H1 (cell line): ENCODE measurements at regions of chr16 and their contacts with region 1.

Region 1: DNA sequence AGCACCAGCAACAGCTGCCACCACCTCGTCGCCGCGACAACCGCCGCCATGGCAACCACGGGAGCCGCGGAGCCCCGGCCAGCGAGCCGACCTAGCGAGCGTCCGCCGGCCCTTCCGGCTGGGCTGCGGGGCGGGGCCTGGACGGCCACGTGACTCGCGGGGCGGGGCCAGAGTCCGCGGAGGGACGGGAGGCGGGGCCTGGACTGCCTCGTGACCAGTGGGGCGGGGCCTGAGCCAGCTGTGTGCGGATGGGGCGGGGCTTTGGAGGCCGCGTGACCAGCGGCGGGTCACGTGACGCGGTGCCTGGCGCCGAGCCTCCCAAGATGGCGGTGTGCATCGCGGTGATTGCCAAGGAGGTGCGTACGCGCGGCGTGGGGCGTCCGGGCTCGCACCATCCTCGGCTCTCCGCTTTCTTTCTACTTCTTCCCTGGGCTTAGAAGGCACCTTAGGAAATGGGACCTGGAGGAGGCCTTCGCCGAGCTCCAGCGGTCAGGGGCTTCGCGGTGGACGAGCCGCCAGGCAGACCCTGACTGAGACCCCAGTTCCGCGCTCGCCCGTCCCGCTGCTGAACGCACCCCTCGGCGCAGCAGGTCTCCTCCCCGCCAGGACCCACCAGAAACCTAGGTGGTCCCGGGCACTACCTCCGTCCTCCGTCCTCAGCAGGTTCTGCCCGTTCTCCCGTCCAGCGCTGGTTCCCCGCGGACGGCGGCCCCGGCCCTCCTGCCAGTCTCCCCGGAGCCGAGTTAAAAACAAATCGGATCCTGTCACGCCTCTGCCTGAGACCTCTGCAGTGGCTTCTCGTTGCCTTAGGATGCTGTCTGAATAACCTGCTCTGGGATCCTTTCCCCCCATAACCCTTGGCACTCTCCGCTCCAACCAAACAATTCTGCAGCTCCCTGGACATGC is at the starts of genes GALNS and TRAPPC2L:
- DNase-seq: peak; percentile 82 to 100
- H3K4me3 ChIP-seq: peak within 1 kb of the TSS; percentile 60 to 96 (median 92)
- H3K27ac ChIP-seq: peak within 1 kb of the TSS; percentile 13; the same call in 1 of the 2 replicates
- H3K4me1 ChIP-seq: peaks cover 0 to 5% (median 3%) of the 10 kb centered on the region in 4 experiments; a peak in 5 of 7 replicates
- H3K27me3 ChIP-seq: no peaks in the 10 kb centered on the region
- CTCF ChIP-seq: no peak
- EP300 ChIP-seq: no peak
- POLR2A ChIP-seq: peak in 1 of 2 experiments; percentile 89; a peak in 2 of 3 replicates
- RAD21 ChIP-seq: no peak
- total RNA-seq, gene GALNS: 17.8 and 22.4 TPM in 2 replicates
- total RNA-seq, gene TRAPPC2L: 94.0 and 98.7 TPM in 2 replicates

Region 2: DNA sequence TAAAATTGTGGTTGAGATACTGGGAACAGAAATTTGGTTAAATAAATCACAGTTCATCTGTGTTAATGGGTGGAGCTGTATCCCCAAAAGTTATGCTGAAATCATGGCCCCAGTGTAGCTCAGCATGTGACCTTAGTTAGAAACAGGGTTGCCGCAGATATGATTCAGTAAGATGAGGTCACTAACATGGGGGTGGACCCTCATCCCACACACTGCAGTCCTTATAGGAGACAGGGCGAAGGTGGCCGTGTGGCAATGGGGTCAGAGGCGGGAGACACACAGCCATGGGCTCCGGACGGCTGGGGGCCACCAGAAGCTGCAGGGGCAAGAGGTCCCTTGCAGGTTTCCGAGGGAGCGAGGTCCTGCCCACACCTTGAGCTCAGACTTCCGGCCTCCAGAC is 11.0 kb before region 1 on chr16:
- CTCF ChIA-PET with region 1: interaction called, 11 read pairs
- POLR2A ChIA-PET with region 1: interaction called, 4 read pairs
- DNase-seq: no peak
- H3K4me3 ChIP-seq: no peak overlapping the region
- H3K27ac ChIP-seq: no peak overlapping the region
- H3K4me1 ChIP-seq: no peaks in the 10 kb centered on the region
- H3K27me3 ChIP-seq: no peaks in the 10 kb centered on the region
- CTCF ChIP-seq: no peak
- EP300 ChIP-seq: no peak
- POLR2A ChIP-seq: no peak
- RAD21 ChIP-seq: no peak

Region 3: GRCh38 chr16:88881007-88881615 is 24.0 kb after region 1 on chr16:
- CTCF ChIA-PET with region 1: interaction called, 11 read pairs
- POLR2A ChIA-PET with region 1: interaction called, 5 read pairs
- DNase-seq: no peak
- H3K4me3 ChIP-seq: 0 out of 8 replicates have a peak overlapping the region, but pooled peaks of 1 of the 4 experiments have one; percentile 24
- H3K27ac ChIP-seq: no peak overlapping the region
- H3K4me1 ChIP-seq: peaks cover 0 to 9% (median 4%) of the 10 kb centered on the region in 4 experiments; a peak in 4 of 7 replicates
- H3K27me3 ChIP-seq: peaks cover 0 to 7% (median 1%) of the 10 kb centered on the region in 4 experiments; a peak in 2 of 7 replicates
- CTCF ChIP-seq: no peak
- EP300 ChIP-seq: no peak
- POLR2A ChIP-seq: no peak
- RAD21 ChIP-seq: no peak

Region 4: GRCh38 chr16:88896238-88897070 is 39.4 kb after region 1 on chr16:
- CTCF ChIA-PET with region 1: interaction called, 10 read pairs
- POLR2A ChIA-PET with region 1: no interaction called
- DNase-seq: no peak
- H3K4me3 ChIP-seq: no peak overlapping the region
- H3K27ac ChIP-seq: no peak overlapping the region
- H3K4me1 ChIP-seq: no peaks in the 10 kb centered on the region
- H3K27me3 ChIP-seq: no peaks in the 10 kb centered on the region
- CTCF ChIP-seq: no peak
- EP300 ChIP-seq: no peak
- POLR2A ChIP-seq: no peak
- RAD21 ChIP-seq: no peak

Region 5: GRCh38 chr16:88983771-88984687 is 126.9 kb after region 1 on chr16:
- CTCF ChIA-PET with region 1: no interaction called
- POLR2A ChIA-PET with region 1: no interaction called
- DNase-seq: no peak
- H3K4me3 ChIP-seq: no peak overlapping the region
- H3K27ac ChIP-seq: no peak overlapping the region
- H3K4me1 ChIP-seq: peaks cover 0 to 2% (median 0%) of the 10 kb centered on the region in 4 experiments; a peak in 1 of 7 replicates
- H3K27me3 ChIP-seq: no peaks in the 10 kb centered on the region
- CTCF ChIP-seq: no peak
- EP300 ChIP-seq: no peak
- POLR2A ChIP-seq: no peak
- RAD21 ChIP-seq: no peak